Activated CD8-positive, alpha-beta T cell treated with anti-CD3 and anti-CD28 coated beads for 36 hours (primary cell): ENCODE measurements at regions of chr15 and their contacts with region 1.

Region 1: GRCh38 chr15:99755692-99756409 is 22.6 kb upstream of the LYSMD4 start:
- DNase-seq: peak; percentile 41
- ATAC-seq: peak; percentile 88
- H3K4me3 Mint-ChIP-seq: no peak overlapping the region
- H3K27ac Mint-ChIP-seq: no peak overlapping the region
- H3K4me1 Mint-ChIP-seq: no peaks in the 10 kb centered on the region
- H3K27me3 Mint-ChIP-seq: peaks cover 6% of the 10 kb centered on the region
- CTCF ChIP-seq: peak; percentile 92

Region 2: DNA sequence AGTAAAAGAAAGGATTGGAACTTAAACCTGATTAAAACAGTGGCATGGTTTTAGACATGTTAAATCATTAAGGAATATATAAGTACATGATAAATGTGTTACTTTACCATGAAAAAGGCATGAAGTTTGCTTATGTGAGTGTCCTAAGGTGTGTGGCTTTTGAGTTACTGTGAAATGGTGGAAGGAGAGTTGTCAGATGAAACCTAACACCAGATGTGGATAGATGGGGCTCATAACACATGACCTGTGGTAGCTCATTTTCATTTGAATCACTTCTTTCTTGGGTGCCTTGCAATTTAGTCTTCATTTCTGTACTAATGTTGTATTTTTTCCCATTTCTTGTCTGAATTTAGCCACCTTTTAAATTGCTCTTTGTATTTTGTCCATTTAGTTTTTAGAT is 177.0 kb before region 1 on chr15:
- CTCF ChIA-PET with region 1: no interaction called
- POLR2A ChIA-PET with region 1: no interaction called
- intact Hi-C with region 1: no loop called
- DNase-seq: no peak
- ATAC-seq: no peak
- H3K4me3 Mint-ChIP-seq: no peak overlapping the region
- H3K27ac Mint-ChIP-seq: no peak overlapping the region
- H3K4me1 Mint-ChIP-seq: peaks cover 55% of the 10 kb centered on the region
- H3K27me3 Mint-ChIP-seq: no peaks in the 10 kb centered on the region
- CTCF ChIP-seq: no peak

Region 3: GRCh38 chr15:99712415-99712814 is 43.4 kb before region 1 on chr15:
- CTCF ChIA-PET with region 1: interaction called, 13 read pairs
- POLR2A ChIA-PET with region 1: no interaction called
- intact Hi-C with region 1: loop called (anchors 5 kb)
- DNase-seq: no peak
- ATAC-seq: no peak
- H3K4me3 Mint-ChIP-seq: no peak overlapping the region
- H3K27ac Mint-ChIP-seq: no peak overlapping the region
- H3K4me1 Mint-ChIP-seq: peaks cover 23% of the 10 kb centered on the region
- H3K27me3 Mint-ChIP-seq: no peaks in the 10 kb centered on the region
- CTCF ChIP-seq: no peak

Region 4: DNA sequence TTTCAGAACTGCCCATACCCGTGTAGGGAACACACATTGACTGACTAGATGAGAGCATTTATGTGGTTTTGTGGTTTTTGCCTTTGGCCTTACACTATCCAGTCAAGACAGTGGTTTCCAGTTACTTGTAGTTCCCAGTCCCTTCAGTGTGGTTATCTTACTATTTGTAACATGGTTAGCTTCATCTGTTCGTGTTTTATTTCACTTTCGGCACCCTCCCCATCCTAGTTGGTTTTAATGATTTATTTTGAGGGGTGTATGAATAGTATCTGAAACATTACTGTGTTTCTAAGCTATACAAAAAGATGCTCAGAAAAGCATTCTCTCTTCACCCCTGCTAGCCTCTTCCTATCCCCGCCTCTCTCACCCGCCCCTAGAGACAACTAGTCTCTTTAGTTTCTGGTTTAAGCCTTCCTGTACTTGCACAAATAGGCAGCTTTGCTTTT is 36.7 kb before region 1 on chr15:
- CTCF ChIA-PET with region 1: interaction called, 13 read pairs
- POLR2A ChIA-PET with region 1: no interaction called
- intact Hi-C with region 1: loop called (anchors 5 kb)
- DNase-seq: no peak
- ATAC-seq: peak; percentile 50
- H3K4me3 Mint-ChIP-seq: no peak overlapping the region
- H3K27ac Mint-ChIP-seq: peak overlapping the region; percentile 30
- H3K4me1 Mint-ChIP-seq: peaks cover 38% of the 10 kb centered on the region
- H3K27me3 Mint-ChIP-seq: no peaks in the 10 kb centered on the region
- CTCF ChIP-seq: no peak

Region 5: GRCh38 chr15:99733268-99734039 is 22.4 kb before region 1 on chr15 and contains the start of gene LYSMD4:
- CTCF ChIA-PET with region 1: interaction called, 15 read pairs
- POLR2A ChIA-PET with region 1: interaction called, 4 read pairs
- intact Hi-C with region 1: no loop called
- DNase-seq: peak; percentile 99
- ATAC-seq: peak; percentile 99
- H3K4me3 Mint-ChIP-seq: peak within 1 kb of the TSS; percentile 79
- H3K27ac Mint-ChIP-seq: peak within 1 kb of the TSS; percentile 94
- H3K4me1 Mint-ChIP-seq: peaks cover 17% of the 10 kb centered on the region
- H3K27me3 Mint-ChIP-seq: no peaks in the 10 kb centered on the region
- CTCF ChIP-seq: no peak
- total RNA-seq, gene LYSMD4: 4.5 to 6.6 TPM

Region 6: DNA sequence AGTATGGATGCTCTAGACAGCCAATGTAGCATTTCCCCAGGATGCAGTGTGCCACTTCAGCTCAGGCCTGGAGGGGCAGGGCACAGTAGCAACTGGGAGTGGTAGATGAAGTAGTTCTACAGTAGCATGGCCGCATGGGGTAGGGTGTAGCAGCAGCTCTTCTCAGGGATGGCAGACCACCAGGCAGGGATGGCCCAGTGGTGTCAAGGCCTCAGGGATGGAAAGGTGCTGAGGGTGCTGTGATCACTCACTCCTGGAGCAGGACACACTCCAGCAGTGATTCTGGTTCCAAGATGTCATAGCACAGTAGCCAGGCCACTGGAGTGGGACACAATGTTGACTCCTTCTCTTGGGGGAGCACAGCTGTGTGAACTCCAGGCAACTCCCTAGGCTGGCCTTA is 188.3 kb after region 1 on chr15:
- CTCF ChIA-PET with region 1: no interaction called
- POLR2A ChIA-PET with region 1: no interaction called
- intact Hi-C with region 1: no loop called
- DNase-seq: no peak
- ATAC-seq: no peak
- H3K4me3 Mint-ChIP-seq: no peak overlapping the region
- H3K27ac Mint-ChIP-seq: no peak overlapping the region
- H3K4me1 Mint-ChIP-seq: no peaks in the 10 kb centered on the region
- H3K27me3 Mint-ChIP-seq: peaks cover 5% of the 10 kb centered on the region
- CTCF ChIP-seq: no peak